RWPE1 (cell line): ENCODE measurements at regions of chr14 and their contacts with region 1.

Region 1: DNA sequence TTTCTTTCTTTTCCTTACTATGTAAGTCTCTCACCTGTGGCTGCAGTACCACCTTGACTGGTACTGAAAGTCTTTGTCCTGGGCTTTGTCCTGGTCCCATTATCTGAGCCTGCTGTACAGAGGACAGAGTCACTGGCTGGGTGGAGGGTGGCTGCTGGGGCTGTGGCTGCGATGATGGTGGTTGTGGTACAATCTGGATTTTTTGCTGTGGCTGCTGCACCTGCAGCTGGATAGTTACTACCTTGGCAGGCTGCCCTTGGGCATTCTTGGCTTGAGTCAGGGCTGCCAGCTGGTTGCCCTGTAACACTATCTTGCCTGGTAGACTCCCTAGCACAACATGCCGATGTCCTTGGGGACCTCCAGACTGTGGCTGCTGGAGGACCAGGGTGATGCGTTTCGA is 27.0 kb downstream of the CHD8 start:
- DNase-seq: no peak
- H3K27ac ChIP-seq: no peak overlapping the region
- CTCF ChIP-seq: no peak

Region 2: GRCh38 chr14:21476366-21476924 is 47.5 kb after region 1 on chr14:
- CTCF ChIA-PET with region 1: no interaction called
- POLR2A ChIA-PET with region 1: interaction called, 12 read pairs
- DNase-seq: peak; percentile 85
- H3K27ac ChIP-seq: peak overlapping the region; percentile 86
- CTCF ChIP-seq: no peak